CD14-positive monocyte (primary cell): ENCODE measurements at regions of chr3 and their contacts with region 1.

Region 1: GRCh38 chr3:46312991-46313390 is 40.9 kb upstream of the CCR2 start:
- DNase-seq: peak; percentile 89 to 99 (median 97)
- H3K4me3 ChIP-seq: peak overlapping the region in 1 of 3 experiments; percentile 35
- H3K4me3 Mint-ChIP-seq: peak overlapping the region in 1 of 2 donors; percentile 56
- H3K27ac ChIP-seq: peak overlapping the region in 1 of 2 donors; percentile 93
- H3K27ac Mint-ChIP-seq: peak overlapping the region; percentile 81 to 94 (median 88)
- H3K4me1 ChIP-seq: peaks cover 72 to 88% of the 10 kb centered on the region in 2 donors
- H3K4me1 Mint-ChIP-seq: peaks cover 78% of the 10 kb centered on the region
- H3K27me3 ChIP-seq: no peaks in the 10 kb centered on the region
- H3K27me3 Mint-ChIP-seq: no peaks in the 10 kb centered on the region
- CTCF ChIP-seq: no peak

Region 2: DNA sequence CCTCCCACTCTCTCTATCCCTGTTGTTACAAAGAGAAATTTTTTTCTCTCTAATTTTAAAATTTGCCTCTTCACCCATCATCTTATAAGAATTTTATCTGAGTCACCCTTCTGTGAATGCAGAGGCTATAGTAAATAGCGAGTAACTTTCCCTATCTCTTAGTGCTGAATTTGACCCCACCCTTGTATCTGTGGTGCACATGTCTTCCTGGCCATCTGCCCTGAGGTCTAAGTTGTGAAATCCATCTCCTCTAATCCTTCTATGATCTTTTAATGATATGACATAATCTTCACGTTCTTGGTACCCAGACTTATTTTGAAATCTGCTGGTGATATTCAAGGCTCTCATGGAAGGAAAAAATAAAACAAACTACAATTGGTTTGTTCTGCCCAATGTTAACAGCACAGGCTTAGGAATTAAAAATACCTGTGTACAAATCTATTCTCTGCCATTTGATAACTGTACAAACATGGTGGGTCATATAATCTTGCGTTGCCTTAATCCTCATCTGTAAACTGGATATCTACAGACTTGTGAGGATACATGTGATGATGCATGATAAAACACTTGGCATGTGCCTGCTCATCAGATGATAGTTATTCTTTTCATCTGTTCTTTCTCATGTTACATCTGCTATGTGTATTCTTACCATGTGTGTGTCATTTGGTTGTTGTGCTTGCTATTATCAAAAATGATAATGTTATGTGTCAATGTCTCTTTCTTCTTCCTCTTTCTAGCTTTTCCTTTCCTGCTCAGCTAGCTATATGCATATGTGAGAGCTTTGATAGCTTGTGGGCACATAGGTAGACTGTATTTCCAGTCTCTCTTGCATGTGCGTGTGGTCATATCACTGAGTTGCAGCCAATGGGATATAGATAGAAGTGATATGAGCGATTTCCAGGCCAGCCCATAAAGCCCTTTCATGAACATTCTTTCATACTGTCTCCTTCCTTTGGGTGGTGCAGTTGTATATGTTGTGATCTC is 84.4 kb before region 1 on chr3:
- intact Hi-C with region 1: loop called in 1 of 2 experiments (anchors 10 kb)
- DNase-seq: peak; percentile 67 to 77 (median 69)
- H3K4me3 ChIP-seq: peak overlapping the region in 1 of 3 experiments; percentile 17
- H3K4me3 Mint-ChIP-seq: peak overlapping the region in 1 of 2 donors; percentile 44
- H3K27ac ChIP-seq: peak overlapping the region in 1 of 2 donors; percentile 30
- H3K27ac Mint-ChIP-seq: peak overlapping the region in 6 of 7 donors; percentile 15 to 88 (median 66)
- H3K4me1 ChIP-seq: peaks cover 28 to 33% of the 10 kb centered on the region in 2 donors
- H3K4me1 Mint-ChIP-seq: peaks cover 32% of the 10 kb centered on the region
- H3K27me3 ChIP-seq: no peaks in the 10 kb centered on the region
- H3K27me3 Mint-ChIP-seq: peaks cover 0 to 10% (median 0%) of the 10 kb centered on the region in 3 donors
- CTCF ChIP-seq: no peak

Region 3: DNA sequence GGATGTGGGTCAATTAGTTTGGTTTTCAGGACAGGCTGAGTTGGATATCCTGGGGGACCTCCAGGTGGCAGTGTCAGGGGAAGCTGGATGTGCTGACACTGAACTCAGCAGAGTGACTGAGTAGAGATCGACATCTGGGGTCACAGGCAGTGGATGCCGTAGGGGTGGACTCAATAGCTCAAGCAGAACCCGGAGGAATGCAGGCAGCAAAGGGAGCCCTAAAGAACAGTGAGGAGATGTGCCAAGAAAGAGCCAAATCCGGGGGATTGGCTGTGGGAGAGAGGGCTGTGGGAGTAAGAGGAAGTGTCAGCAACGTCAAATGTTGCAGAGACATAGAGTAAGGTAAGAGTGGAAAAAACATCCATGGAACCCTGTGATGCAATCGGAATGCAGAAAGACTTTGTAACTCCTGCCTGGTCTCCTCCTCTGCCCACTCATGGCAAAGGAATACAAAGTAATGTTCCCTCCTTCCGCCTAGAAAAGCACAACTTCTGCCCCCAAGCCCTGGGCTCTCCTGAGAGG is 82.3 kb after region 1 on chr3:
- intact Hi-C with region 1: no loop called
- DNase-seq: peak; percentile 23 to 89 (median 68)
- H3K4me3 ChIP-seq: no peak overlapping the region
- H3K4me3 Mint-ChIP-seq: peak overlapping the region in 1 of 2 donors; percentile 23
- H3K27ac ChIP-seq: peak overlapping the region; percentile 49 to 70
- H3K27ac Mint-ChIP-seq: peak overlapping the region; percentile 71 to 88 (median 79)
- H3K4me1 ChIP-seq: peaks cover 48 to 57% of the 10 kb centered on the region in 2 donors
- H3K4me1 Mint-ChIP-seq: peaks cover 47% of the 10 kb centered on the region
- H3K27me3 ChIP-seq: no peaks in the 10 kb centered on the region
- H3K27me3 Mint-ChIP-seq: peaks cover 0 to 4% (median 0%) of the 10 kb centered on the region in 3 donors
- CTCF ChIP-seq: no peak